ENCODE measurements at regions of chr7 and their contacts with region 1.

Region 1: GRCh38 chr7:87416682-87417587 is 58.5 kb downstream of the ABCB4 start:
- DNase-seq: peak; percentile 44
- ATAC-seq: peak; percentile 96
- H3K4me3 ChIP-seq: no peak overlapping the region
- H3K27ac ChIP-seq: no peak overlapping the region
- H3K4me1 ChIP-seq: no peaks in the 10 kb centered on the region
- H3K27me3 ChIP-seq: no peaks in the 10 kb centered on the region
- CTCF ChIP-seq: peak; percentile 55 to 82 (median 61)
- EP300 ChIP-seq: no peak
- POLR2A ChIP-seq: no peak
- RAD21 ChIP-seq: peak; percentile 90

Region 2: DNA sequence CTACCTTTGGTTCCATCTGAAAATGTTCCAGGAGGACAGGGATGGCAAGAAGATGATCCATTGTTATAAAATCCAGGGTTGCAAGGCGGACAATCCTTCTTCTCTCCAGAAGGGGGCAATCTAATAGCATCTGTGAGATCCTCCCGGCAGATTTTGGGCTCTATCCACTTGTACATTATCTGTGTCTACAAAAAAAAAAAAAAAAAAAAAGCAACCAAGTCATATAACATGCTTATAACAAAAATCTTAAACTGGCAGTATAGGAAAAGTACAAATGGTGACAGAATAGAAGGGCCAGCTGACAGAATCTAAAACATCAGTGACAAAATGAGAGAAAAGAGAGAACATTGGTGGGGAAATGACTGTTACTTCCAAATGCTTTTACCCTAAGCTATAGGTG is 490.2 kb before region 1 on chr7:
- CTCF ChIA-PET with region 1: interaction called, 6 read pairs
- POLR2A ChIA-PET with region 1: no interaction called
- RAD21 ChIA-PET with region 1: interaction called, 3 read pairs
- SMC1A ChIA-PET with region 1: interaction called, 3 read pairs
- in situ Hi-C with region 1: loop called (anchors 25 kb)
- intact Hi-C with region 1: loop called (anchors 5 kb)
- DNase-seq: no peak
- ATAC-seq: peak; percentile 80
- H3K4me3 ChIP-seq: no peak overlapping the region
- H3K27ac ChIP-seq: no peak overlapping the region
- H3K4me1 ChIP-seq: peaks cover 10% of the 10 kb centered on the region
- H3K27me3 ChIP-seq: no peaks in the 10 kb centered on the region
- CTCF ChIP-seq: peak; percentile 67 to 72 (median 70)
- EP300 ChIP-seq: no peak
- POLR2A ChIP-seq: no peak
- RAD21 ChIP-seq: peak; percentile 84

Region 3: DNA sequence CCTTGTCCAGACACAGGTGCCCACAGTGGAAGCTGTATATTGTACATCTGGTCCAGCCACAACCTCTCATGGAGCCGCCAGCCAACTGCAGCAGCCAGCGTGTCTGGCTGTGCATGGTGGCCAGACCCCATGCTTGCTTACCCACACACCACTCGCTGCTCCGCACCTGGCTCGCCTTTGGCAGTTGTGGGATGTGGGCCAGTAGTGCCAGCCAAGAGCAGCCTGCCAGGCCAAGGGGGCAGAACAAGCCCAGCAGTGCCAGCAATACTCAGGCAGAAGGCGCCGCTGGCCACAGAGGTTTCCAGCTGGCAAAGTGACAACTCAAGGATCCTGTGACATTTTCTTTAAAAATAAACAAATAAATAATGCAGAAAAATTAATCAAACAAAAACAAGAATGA is 185.7 kb before region 1 on chr7:
- CTCF ChIA-PET with region 1: interaction called, 4 read pairs
- POLR2A ChIA-PET with region 1: no interaction called
- RAD21 ChIA-PET with region 1: no interaction called
- SMC1A ChIA-PET with region 1: interaction called, 6 read pairs
- in situ Hi-C with region 1: no loop called
- intact Hi-C with region 1: loop called (anchors 2 kb)
- DNase-seq: no peak
- ATAC-seq: no peak
- H3K4me3 ChIP-seq: no peak overlapping the region
- H3K27ac ChIP-seq: no peak overlapping the region
- H3K4me1 ChIP-seq: no peaks in the 10 kb centered on the region
- H3K27me3 ChIP-seq: no peaks in the 10 kb centered on the region
- CTCF ChIP-seq: no peak
- EP300 ChIP-seq: no peak
- POLR2A ChIP-seq: no peak
- RAD21 ChIP-seq: no peak

Region 4: GRCh38 chr7:87312215-87312865 is 104.6 kb before region 1 on chr7:
- CTCF ChIA-PET with region 1: interaction called, 296 read pairs
- POLR2A ChIA-PET with region 1: interaction called, 8 read pairs
- RAD21 ChIA-PET with region 1: interaction called, 109 read pairs
- SMC1A ChIA-PET with region 1: interaction called, 260 read pairs
- in situ Hi-C with region 1: loop called (anchors 5 kb)
- intact Hi-C with region 1: loop called (anchors 1 kb)
- DNase-seq: peak; percentile 15
- ATAC-seq: peak; percentile 81
- H3K4me3 ChIP-seq: no peak overlapping the region
- H3K27ac ChIP-seq: no peak overlapping the region
- H3K4me1 ChIP-seq: peaks cover 8% of the 10 kb centered on the region
- H3K27me3 ChIP-seq: no peaks in the 10 kb centered on the region
- CTCF ChIP-seq: peak; percentile 97 to 98 (median 98); a peak in 5 of 6 replicates
- EP300 ChIP-seq: no peak
- POLR2A ChIP-seq: no peak
- RAD21 ChIP-seq: peak; percentile 100

Region 5: DNA sequence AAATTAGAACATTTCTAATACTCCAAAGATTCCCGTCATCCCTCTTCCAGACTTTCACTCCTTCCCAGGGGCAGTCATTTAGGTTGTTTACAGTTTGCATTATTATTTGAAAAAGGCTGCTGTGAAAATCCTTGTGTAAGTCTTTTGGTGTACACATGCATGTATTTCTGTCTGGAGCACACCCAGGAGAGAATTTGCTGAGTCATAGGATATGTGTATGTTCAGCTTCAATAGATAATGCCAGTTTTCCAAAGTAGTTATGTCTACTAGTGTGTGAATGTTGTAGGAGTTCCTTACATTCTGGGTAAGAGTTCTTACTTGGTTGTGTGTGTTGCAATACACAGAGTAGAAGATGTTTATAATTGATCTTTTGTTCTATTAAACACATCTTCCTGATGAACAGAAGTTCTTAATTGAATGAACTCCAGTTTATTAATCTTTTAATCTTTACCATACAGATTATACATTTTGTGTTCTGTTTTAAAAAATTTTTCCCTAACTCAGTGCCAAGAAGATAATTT is 46.2 kb before region 1 on chr7:
- CTCF ChIA-PET with region 1: interaction called, 6 read pairs
- POLR2A ChIA-PET with region 1: no interaction called
- RAD21 ChIA-PET with region 1: interaction called, 4 read pairs
- SMC1A ChIA-PET with region 1: interaction called, 3 read pairs
- in situ Hi-C with region 1: no loop called
- intact Hi-C with region 1: loop called (anchors 2 kb)
- DNase-seq: no peak
- ATAC-seq: no peak
- H3K4me3 ChIP-seq: no peak overlapping the region
- H3K27ac ChIP-seq: no peak overlapping the region
- H3K4me1 ChIP-seq: no peaks in the 10 kb centered on the region
- H3K27me3 ChIP-seq: no peaks in the 10 kb centered on the region
- CTCF ChIP-seq: no peak
- EP300 ChIP-seq: no peak
- POLR2A ChIP-seq: no peak
- RAD21 ChIP-seq: no peak

Region 6: DNA sequence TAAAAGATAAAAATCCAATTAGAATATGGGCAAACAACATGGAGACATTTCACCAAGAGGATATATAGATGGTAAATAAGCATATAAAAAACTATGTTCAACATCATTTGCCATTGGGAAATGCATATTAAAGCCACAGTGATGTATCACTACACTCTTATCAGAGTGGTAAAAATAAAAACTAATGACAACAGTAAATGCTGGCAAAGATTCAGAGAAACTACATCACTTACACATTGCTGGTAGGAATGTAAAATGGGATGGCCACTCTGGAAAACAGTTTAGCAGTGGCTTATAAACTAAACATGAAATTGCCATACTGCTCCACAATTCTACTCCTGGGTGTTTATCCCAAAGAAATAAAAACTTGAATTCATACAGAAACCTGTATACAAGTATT is 12.3 kb before region 1 on chr7:
- CTCF ChIA-PET with region 1: interaction called, 21 read pairs
- POLR2A ChIA-PET with region 1: interaction called, 3 read pairs
- RAD21 ChIA-PET with region 1: interaction called, 6 read pairs
- SMC1A ChIA-PET with region 1: interaction called, 74 read pairs
- in situ Hi-C with region 1: no loop called
- intact Hi-C with region 1: no loop called
- DNase-seq: no peak
- ATAC-seq: no peak
- H3K4me3 ChIP-seq: no peak overlapping the region
- H3K27ac ChIP-seq: no peak overlapping the region
- H3K4me1 ChIP-seq: no peaks in the 10 kb centered on the region
- H3K27me3 ChIP-seq: no peaks in the 10 kb centered on the region
- CTCF ChIP-seq: no peak
- EP300 ChIP-seq: no peak
- POLR2A ChIP-seq: no peak
- RAD21 ChIP-seq: no peak

Region 7: GRCh38 chr7:87506246-87507180 is 89.6 kb after region 1 on chr7:
- CTCF ChIA-PET with region 1: interaction called, 6 read pairs
- POLR2A ChIA-PET with region 1: no interaction called
- RAD21 ChIA-PET with region 1: interaction called, 6 read pairs
- SMC1A ChIA-PET with region 1: interaction called, 10 read pairs
- in situ Hi-C with region 1: no loop called
- intact Hi-C with region 1: no loop called
- DNase-seq: no peak
- ATAC-seq: peak; percentile 57
- H3K4me3 ChIP-seq: no peak overlapping the region
- H3K27ac ChIP-seq: no peak overlapping the region
- H3K4me1 ChIP-seq: no peaks in the 10 kb centered on the region
- H3K27me3 ChIP-seq: no peaks in the 10 kb centered on the region
- CTCF ChIP-seq: peak; percentile 12 to 55 (median 31); a peak in 4 of 6 replicates
- EP300 ChIP-seq: no peak
- POLR2A ChIP-seq: no peak
- RAD21 ChIP-seq: peak; percentile 69

Measured in GM12878 (cell line).